ENCODE measurements at regions of chr1 and their contacts with region 1.

Region 1: GRCh38 chr1:9629445-9630201 is 21.9 kb upstream of the PIK3CD start:
- DNase-seq: peak; percentile 90
- ATAC-seq: peak; percentile 51
- H3K4me3 ChIP-seq: peak overlapping the region; percentile 51 to 85 (median 70)
- H3K4me3 Mint-ChIP-seq: peak overlapping the region; percentile 86
- H3K27ac ChIP-seq: peak overlapping the region; percentile 79 to 88
- H3K27ac Mint-ChIP-seq: peak overlapping the region; percentile 97
- H3K4me1 ChIP-seq: peaks cover 37 to 70% of the 10 kb centered on the region in 2 donors
- H3K4me1 Mint-ChIP-seq: peaks cover 69% of the 10 kb centered on the region
- H3K27me3 ChIP-seq: no peaks in the 10 kb centered on the region
- H3K27me3 Mint-ChIP-seq: no peaks in the 10 kb centered on the region
- CTCF ChIP-seq: no peak

Region 2: GRCh38 chr1:9615316-9616063 is 14.1 kb before region 1 on chr1:
- CTCF ChIA-PET with region 1: interaction called, 83 read pairs
- POLR2A ChIA-PET with region 1: interaction called, 4 read pairs
- intact Hi-C with region 1: no loop called
- DNase-seq: peak; percentile 72
- ATAC-seq: peak; percentile 96
- H3K4me3 ChIP-seq: no peak overlapping the region
- H3K4me3 Mint-ChIP-seq: no peak overlapping the region
- H3K27ac ChIP-seq: no peak overlapping the region
- H3K27ac Mint-ChIP-seq: no peak overlapping the region
- H3K4me1 ChIP-seq: peaks cover 4 to 9% of the 10 kb centered on the region in 2 donors
- H3K4me1 Mint-ChIP-seq: peaks cover 2% of the 10 kb centered on the region
- H3K27me3 ChIP-seq: no peaks in the 10 kb centered on the region
- H3K27me3 Mint-ChIP-seq: peaks cover 3% of the 10 kb centered on the region
- CTCF ChIP-seq: peak; percentile 76

Region 3: DNA sequence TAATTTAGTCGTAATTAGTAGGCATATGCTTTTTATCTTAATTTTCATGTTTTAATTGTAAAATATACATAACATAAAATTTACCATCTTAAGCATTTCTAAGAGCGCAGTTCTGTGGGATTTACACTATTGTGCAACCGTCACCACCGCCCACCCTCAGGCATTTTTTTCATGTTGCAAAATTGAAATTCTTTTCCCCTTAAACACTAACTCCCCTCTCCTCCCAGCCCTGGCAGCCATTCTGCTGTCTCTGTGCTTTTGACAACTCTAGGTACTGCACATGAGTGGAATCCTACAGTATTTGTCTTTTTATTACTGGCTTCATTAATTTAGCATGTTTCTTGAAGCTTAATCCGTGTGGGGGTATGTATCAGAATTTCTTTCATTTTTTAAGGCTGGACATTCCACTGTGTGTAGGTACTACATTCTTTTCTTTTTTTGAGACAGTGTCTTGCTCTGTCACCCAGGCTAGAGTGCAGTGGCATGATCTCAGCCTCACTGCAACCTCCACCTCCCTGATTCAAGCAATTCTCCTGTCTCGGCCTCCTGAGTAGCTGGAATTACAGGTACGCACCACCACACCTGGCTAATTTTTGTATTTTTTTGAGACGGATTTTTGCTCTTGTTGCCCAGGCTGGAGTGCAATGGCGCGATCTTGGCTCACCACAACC is 29.8 kb after region 1 on chr1:
- CTCF ChIA-PET with region 1: interaction called, 231 read pairs
- POLR2A ChIA-PET with region 1: interaction called, 251 read pairs
- intact Hi-C with region 1: loop called (anchors 1 kb)
- DNase-seq: no peak
- ATAC-seq: no peak
- H3K4me3 ChIP-seq: no peak overlapping the region
- H3K4me3 Mint-ChIP-seq: no peak overlapping the region
- H3K27ac ChIP-seq: peak overlapping the region in 1 of 2 donors; percentile 0
- H3K27ac Mint-ChIP-seq: peak overlapping the region; percentile 82
- H3K4me1 ChIP-seq: peaks cover 49 to 66% of the 10 kb centered on the region in 2 donors
- H3K4me1 Mint-ChIP-seq: peaks cover 73% of the 10 kb centered on the region
- H3K27me3 ChIP-seq: no peaks in the 10 kb centered on the region
- H3K27me3 Mint-ChIP-seq: no peaks in the 10 kb centered on the region
- CTCF ChIP-seq: no peak

Region 4: GRCh38 chr1:9680828-9681227 is 51.2 kb after region 1 on chr1:
- CTCF ChIA-PET with region 1: interaction called, 119 read pairs
- POLR2A ChIA-PET with region 1: interaction called, 4 read pairs
- intact Hi-C with region 1: loop called (anchors 1 kb)
- DNase-seq: peak; percentile 53
- ATAC-seq: peak; percentile 66
- H3K4me3 ChIP-seq: no peak overlapping the region
- H3K4me3 Mint-ChIP-seq: peak overlapping the region; percentile 31
- H3K27ac ChIP-seq: peak overlapping the region; percentile 0 to 78
- H3K27ac Mint-ChIP-seq: peak overlapping the region; percentile 83
- H3K4me1 ChIP-seq: peaks cover 45 to 74% of the 10 kb centered on the region in 2 donors
- H3K4me1 Mint-ChIP-seq: peaks cover 54% of the 10 kb centered on the region
- H3K27me3 ChIP-seq: no peaks in the 10 kb centered on the region
- H3K27me3 Mint-ChIP-seq: no peaks in the 10 kb centered on the region
- CTCF ChIP-seq: no peak

Region 5: DNA sequence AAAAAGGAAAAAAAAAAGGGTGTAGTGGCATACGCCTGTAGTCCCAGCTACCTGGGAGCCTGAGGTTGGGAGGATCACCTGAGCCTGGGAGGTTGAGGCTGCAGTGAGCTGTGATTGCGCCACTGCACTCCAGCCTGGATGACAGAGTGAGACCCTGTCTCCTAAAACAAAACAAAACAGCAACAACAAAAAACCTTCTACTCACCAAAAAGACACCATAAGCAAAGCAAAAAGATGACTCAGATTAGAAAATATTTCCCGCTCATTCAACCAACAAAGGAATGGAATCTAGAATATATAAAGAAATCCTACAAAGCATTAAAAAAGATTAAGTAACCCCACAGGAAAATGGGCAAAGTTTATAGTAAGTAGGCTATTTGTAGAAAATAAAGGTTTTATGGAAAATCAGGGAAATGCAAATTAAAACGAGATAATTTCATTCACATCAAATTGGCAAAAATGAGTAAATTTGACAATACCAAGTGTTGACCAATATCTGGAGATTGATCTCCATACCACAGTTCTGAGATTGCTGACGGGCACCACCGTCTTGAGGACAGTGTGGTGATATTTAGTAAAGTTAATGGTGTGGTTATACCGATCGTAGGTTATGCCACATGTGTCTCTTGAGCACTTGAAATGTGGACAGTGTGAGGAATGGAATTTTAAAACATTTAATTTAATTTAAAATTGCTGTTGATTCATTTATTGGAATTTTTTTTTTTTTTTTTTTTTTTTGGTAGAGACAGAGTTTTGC is 75.9 kb after region 1 on chr1:
- CTCF ChIA-PET with region 1: interaction called, 42 read pairs
- POLR2A ChIA-PET with region 1: interaction called, 5 read pairs
- intact Hi-C with region 1: loop called (anchors 5 kb)
- DNase-seq: no peak
- ATAC-seq: no peak
- H3K4me3 ChIP-seq: no peak overlapping the region
- H3K4me3 Mint-ChIP-seq: no peak overlapping the region
- H3K27ac ChIP-seq: peak overlapping the region in 1 of 2 donors; percentile 7
- H3K27ac Mint-ChIP-seq: peak overlapping the region; percentile 27
- H3K4me1 ChIP-seq: peaks cover 38 to 50% of the 10 kb centered on the region in 2 donors
- H3K4me1 Mint-ChIP-seq: peaks cover 56% of the 10 kb centered on the region
- H3K27me3 ChIP-seq: no peaks in the 10 kb centered on the region
- H3K27me3 Mint-ChIP-seq: no peaks in the 10 kb centered on the region
- CTCF ChIP-seq: no peak

Region 6: GRCh38 chr1:9861360-9861759 is 231.7 kb after region 1 on chr1:
- CTCF ChIA-PET with region 1: interaction called, 10 read pairs
- POLR2A ChIA-PET with region 1: no interaction called
- intact Hi-C with region 1: no loop called
- DNase-seq: no peak
- ATAC-seq: no peak
- H3K4me3 ChIP-seq: no peak overlapping the region
- H3K4me3 Mint-ChIP-seq: no peak overlapping the region
- H3K27ac ChIP-seq: no peak overlapping the region
- H3K27ac Mint-ChIP-seq: no peak overlapping the region
- H3K4me1 ChIP-seq: no peaks in the 10 kb centered on the region
- H3K4me1 Mint-ChIP-seq: peaks cover 1% of the 10 kb centered on the region
- H3K27me3 ChIP-seq: no peaks in the 10 kb centered on the region
- H3K27me3 Mint-ChIP-seq: no peaks in the 10 kb centered on the region
- CTCF ChIP-seq: no peak

Measured in B cell (primary cell).